ENCODE measurements at regions of chr18 and their contacts with region 1.

Region 1: DNA sequence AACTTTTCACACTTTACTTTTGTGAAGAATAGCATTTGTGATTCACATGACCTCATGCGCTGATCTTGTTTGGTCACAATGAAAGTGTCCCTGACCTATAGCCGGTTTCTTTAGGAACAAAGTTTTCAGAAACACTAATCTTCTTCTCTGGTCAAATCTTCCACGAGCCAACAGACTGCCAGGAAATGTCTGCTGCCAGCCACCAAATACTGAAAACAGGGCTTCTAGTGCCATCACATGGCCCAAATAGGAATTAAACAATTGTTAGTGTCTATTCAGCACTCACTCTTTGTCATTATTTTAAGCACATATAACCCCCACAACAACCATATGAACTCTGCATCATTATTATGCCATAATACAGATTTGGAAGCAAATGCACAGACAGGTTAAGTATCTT is 286.5 kb upstream of the SYT4 start:
- DNase-seq: no peak
- ATAC-seq: peak; percentile 62

Region 2: DNA sequence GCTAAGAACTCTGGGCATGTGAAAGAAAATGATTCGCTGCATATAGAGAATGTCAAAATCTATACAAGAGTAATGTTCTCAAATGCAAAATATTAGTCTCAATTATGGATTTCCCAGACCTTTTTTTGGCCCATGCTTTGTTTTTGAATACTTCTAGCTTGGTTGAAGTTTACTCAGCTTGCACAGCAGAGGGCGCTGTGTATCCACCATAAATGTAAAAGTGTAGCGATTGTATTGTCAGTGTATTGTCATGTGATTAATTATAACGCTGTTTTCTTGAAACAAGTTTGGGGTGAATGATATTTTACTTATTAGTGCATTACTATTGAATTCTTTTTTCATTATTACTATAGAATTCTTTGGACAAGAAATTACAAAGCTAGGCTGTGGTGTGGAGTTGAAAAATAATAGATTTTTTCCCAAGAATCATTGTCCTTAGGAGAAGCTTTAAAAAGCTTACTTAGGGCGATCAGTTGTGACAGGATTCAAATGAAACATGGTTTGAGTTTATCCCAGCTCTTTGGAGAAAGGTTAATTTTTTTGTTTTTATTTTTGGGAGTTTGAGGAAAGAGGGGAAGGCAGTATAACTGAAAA is 1510.5 kb before region 1 on chr18:
- intact Hi-C with region 1: loop called (anchors 5 kb)
- DNase-seq: peak; percentile 41
- ATAC-seq: peak; percentile 85

Region 3: GRCh38 chr18:43542016-43542415 is 21.8 kb before region 1 on chr18:
- intact Hi-C with region 1: no loop called
- DNase-seq: no peak
- ATAC-seq: no peak

Measured in Right ventricle myocardium superior (tissue), 1 donor.